ENCODE measurements at regions of chr17 and their contacts with region 1.

Region 1: DNA sequence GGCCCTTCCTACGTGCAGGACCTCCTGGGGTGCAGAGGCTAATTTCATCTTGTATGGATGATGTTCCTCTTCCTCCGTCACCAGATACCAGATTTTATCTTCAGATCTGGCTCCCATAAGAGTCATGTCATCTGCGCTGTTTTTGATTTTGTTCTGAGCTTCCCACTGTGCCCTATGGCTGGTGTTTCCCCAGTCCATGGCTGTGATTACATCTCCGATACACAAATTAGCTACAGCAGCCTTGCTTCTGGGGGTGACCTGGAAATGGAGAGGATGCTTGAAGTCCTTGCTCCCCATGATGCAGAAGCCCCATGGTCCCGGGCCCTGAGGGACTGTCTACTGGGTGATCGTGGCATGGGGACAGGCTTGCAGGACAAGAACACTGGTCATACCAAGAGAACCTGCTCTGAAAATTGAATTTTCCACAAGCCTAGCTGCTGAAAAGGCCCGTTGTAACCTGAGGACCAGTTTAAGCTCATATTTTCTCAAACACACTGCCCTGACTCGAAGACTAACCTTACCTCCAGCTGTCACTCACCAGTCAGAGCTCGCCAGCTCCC is 69.0 kb downstream of the KCNJ12 start:
- DNase-seq: no peak
- H3K4me3 ChIP-seq: no peak overlapping the region
- H3K27ac ChIP-seq: no peak overlapping the region
- H3K4me1 ChIP-seq: no peaks in the 10 kb centered on the region
- H3K27me3 ChIP-seq: no peaks in the 10 kb centered on the region
- CTCF ChIP-seq: no peak

Region 2: GRCh38 chr17:21376759-21377690 is 68.1 kb before region 1 on chr17:
- CTCF ChIA-PET with region 1: no interaction called
- dilution Hi-C with region 1: no loop called
- in situ Hi-C with region 1: loop called in 1 of 2 experiments (anchors 10 kb)
- intact Hi-C with region 1: loop called (anchors 10 kb)
- DNase-seq: peak; percentile 23
- H3K4me3 ChIP-seq: peak overlapping the region; percentile 11 to 30 (median 23)
- H3K27ac ChIP-seq: no peak overlapping the region
- H3K4me1 ChIP-seq: peaks cover 16% of the 10 kb centered on the region
- H3K27me3 ChIP-seq: peaks cover 21% of the 10 kb centered on the region
- CTCF ChIP-seq: no peak

Region 3: GRCh38 chr17:21388066-21388465 is 57.1 kb before region 1 on chr17:
- CTCF ChIA-PET with region 1: no interaction called
- dilution Hi-C with region 1: no loop called
- in situ Hi-C with region 1: loop called in 1 of 2 experiments (anchors 10 kb)
- intact Hi-C with region 1: no loop called
- DNase-seq: no peak
- H3K4me3 ChIP-seq: no peak overlapping the region
- H3K27ac ChIP-seq: no peak overlapping the region
- H3K4me1 ChIP-seq: no peaks in the 10 kb centered on the region
- H3K27me3 ChIP-seq: no peaks in the 10 kb centered on the region
- CTCF ChIP-seq: no peak

Region 4: DNA sequence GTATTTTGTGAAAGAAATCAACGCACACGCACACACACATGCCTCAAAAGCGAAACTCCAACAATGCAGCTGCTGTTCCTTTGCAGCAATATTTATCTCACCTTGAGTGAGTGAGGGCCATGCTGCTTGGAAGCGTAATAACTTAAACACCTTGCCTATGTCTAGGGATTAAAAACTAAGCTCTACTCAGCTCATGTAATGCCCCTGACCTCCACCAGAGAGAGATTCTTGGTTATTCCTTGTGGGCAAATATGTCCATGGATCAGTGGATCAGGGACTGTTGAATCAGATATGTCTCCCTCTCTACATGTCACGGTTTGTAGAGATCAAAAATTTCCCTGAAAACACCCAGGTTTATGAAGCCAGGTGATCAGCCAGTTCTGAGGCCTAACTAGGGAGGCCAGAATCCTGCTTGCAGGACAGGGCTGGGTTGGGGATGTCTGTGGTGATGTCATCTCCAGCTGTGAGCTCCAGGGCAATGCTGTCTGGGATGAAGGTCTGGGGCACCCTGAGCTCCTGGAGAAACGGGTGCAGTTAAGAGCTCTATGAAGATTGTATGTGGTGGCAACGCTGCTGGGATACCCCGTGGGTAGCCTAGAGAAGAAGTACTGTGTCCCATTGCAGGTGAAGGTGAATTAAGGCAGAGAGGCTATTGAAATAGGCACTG is 80.4 kb after region 1 on chr17:
- CTCF ChIA-PET with region 1: no interaction called
- dilution Hi-C with region 1: no loop called
- in situ Hi-C with region 1: no loop called
- intact Hi-C with region 1: no loop called
- DNase-seq: no peak
- H3K4me3 ChIP-seq: no peak overlapping the region
- H3K27ac ChIP-seq: no peak overlapping the region
- H3K4me1 ChIP-seq: no peaks in the 10 kb centered on the region
- H3K27me3 ChIP-seq: no peaks in the 10 kb centered on the region
- CTCF ChIP-seq: no peak

Measured in mammary epithelial cell (primary cell).